Left colon (tissue), 2 donors: ENCODE measurements at regions of chr3 and their contacts with region 1.

Region 1: DNA sequence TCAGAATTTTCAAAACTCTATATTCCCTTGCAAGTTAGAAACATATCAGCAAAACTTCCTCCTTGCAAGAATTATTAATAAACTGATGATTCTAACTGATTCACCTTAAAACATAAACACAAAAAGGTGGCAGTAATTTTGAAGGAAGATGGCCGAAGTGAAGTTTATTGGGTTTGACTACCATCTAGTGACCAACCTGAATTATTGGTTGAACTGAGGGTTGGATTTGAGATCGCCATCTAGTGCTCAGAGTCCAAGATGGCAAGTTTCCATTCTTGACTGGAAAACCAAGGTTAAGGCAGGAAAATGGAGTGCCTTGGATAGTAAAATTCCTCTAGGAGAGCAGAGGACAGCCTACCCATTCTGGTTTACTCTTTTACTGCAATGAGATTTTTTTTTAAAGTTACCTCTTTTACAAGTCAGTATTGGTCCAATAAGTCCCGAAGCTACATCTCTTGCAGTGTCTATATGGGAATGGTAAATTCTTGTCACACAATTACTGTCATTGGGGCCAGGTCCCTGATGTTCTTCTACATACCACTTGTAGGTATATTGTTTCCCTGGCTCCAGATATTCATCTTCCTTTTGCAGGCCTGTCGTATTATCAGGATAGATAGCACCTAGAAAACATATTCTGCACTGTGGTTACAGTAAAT is 51.6 kb upstream of the CP start:
- DNase-seq: no peak
- ATAC-seq: peak; percentile 79

Region 2: DNA sequence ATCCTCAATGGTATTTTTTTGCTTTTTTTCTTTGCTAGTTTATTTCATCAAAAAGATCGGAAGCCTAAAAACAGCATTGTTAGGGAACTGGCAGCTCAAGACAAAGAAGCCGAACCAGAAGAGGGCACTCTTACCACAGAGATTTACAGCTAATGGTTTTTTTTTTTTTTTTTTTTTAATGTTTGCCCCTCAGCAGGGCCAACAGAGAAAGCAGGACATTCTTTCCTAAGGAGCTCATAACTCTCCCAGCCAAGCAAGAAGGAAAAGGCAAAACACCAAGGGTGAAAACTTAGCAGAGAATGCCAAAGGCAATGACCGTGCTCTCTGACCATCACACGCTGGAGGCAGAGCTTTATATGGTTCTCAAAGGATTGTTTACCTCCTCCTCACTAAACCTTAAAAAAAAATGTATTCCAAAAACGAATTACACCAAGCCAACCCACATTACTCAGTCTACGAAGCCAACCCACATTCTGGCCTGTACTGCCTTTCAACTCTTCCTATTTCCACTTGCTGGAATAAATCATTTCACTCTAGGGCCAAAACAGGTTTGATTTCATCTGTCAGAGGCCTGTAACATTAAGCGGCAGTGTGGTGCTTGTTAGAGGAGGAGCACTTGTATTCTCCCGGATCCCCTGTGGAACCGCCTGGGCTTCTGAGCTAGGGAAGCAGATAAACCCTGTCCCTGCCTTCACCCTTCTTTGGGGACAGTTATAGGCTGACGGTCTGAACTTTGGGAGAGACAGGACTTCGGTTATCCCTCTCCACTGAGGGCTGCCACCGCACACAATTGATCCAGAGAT is 317.5 kb before region 1 on chr3:
- intact Hi-C with region 1: loop called (anchors 5 to 10 kb)
- DNase-seq: peak; percentile 15 to 44
- ATAC-seq: peak; percentile 53

Region 3: GRCh38 chr3:149114458-149114857 is 158.8 kb before region 1 on chr3:
- intact Hi-C with region 1: loop called in 1 of 2 experiments (anchors 10 kb)
- DNase-seq: no peak
- ATAC-seq: no peak

Region 4: GRCh38 chr3:149120051-149120972 is 152.9 kb before region 1 on chr3:
- intact Hi-C with region 1: loop called (anchors 2 to 10 kb)
- DNase-seq: no peak
- ATAC-seq: peak; percentile 66